ENCODE measurements at regions of chr9 and their contacts with region 1.

Region 1: DNA sequence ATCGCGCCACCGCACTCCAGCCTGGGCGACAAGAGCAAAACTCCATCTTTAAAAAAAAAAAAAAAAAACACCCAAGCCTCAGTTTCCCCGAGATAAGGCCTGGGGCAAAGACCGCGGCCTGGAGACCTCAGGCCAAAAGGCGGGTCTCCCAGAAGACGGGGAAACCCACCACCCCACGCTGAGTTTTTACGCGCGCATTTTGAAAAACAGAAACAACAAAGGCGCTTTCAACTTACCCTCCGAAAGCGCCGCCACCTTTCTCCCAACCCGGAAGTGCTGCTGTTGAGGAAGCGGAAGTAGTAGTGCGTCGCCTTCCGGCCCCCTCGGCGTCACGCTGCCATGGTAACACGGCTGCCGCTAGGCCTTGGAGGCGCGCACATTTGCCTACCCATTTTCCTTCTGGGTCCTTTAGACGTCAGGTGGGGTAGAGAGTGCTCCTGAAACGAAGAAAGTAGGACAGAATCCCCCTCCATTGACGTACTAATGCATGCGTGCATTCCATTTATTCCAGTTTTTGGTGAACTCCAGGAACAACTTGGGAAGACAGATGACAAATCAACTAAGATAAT is at the start of gene TTF1:
- DNase-seq: peak; percentile 86 to 97 (median 94)
- ATAC-seq: peak; percentile 76
- H3K4me3 ChIP-seq: peak within 1 kb of the TSS; percentile 72
- H3K4me3 Mint-ChIP-seq: peak within 1 kb of the TSS; percentile 89
- H3K27ac ChIP-seq: peak within 1 kb of the TSS; percentile 48 to 60
- H3K27ac Mint-ChIP-seq: peak within 1 kb of the TSS; percentile 83
- H3K4me1 ChIP-seq: peaks cover 59% of the 10 kb centered on the region
- H3K4me1 Mint-ChIP-seq: peaks cover 63% of the 10 kb centered on the region
- H3K27me3 ChIP-seq: peaks cover 12 to 13% of the 10 kb centered on the region in 2 experiments
- H3K27me3 Mint-ChIP-seq: peaks cover 16% of the 10 kb centered on the region
- CTCF ChIP-seq: no peak
- total RNA-seq, gene TTF1: 12.4 to 12.8 TPM

Region 2: GRCh38 chr9:131762356-131762932 is 644.2 kb before region 1 on chr9:
- CTCF ChIA-PET with region 1: no interaction called
- POLR2A ChIA-PET with region 1: no interaction called
- intact Hi-C with region 1: loop called in 1 of 2 experiments (anchors 2 kb)
- DNase-seq: peak; percentile 62 to 88 (median 72)
- ATAC-seq: peak; percentile 97
- H3K4me3 ChIP-seq: no peak overlapping the region
- H3K4me3 Mint-ChIP-seq: no peak overlapping the region
- H3K27ac ChIP-seq: no peak overlapping the region
- H3K27ac Mint-ChIP-seq: no peak overlapping the region
- H3K4me1 ChIP-seq: peaks cover 7% of the 10 kb centered on the region
- H3K4me1 Mint-ChIP-seq: no peaks in the 10 kb centered on the region
- H3K27me3 ChIP-seq: no peaks in the 10 kb centered on the region
- H3K27me3 Mint-ChIP-seq: peaks cover 21% of the 10 kb centered on the region
- CTCF ChIP-seq: peak; percentile 97

Region 3: GRCh38 chr9:132486706-132487350 is 80.2 kb after region 1 on chr9:
- CTCF ChIA-PET with region 1: no interaction called
- POLR2A ChIA-PET with region 1: no interaction called
- intact Hi-C with region 1: loop called in 1 of 2 experiments (anchors 1 kb)
- DNase-seq: peak in 11 of 14 experiments; percentile 4 to 83 (median 28)
- ATAC-seq: peak; percentile 65
- H3K4me3 ChIP-seq: peak overlapping the region; percentile 35
- H3K4me3 Mint-ChIP-seq: peak overlapping the region; percentile 74
- H3K27ac ChIP-seq: no peak overlapping the region
- H3K27ac Mint-ChIP-seq: peak overlapping the region; percentile 32
- H3K4me1 ChIP-seq: peaks cover 29% of the 10 kb centered on the region
- H3K4me1 Mint-ChIP-seq: peaks cover 27% of the 10 kb centered on the region
- H3K27me3 ChIP-seq: peaks cover 18 to 30% of the 10 kb centered on the region in 2 experiments
- H3K27me3 Mint-ChIP-seq: peaks cover 64% of the 10 kb centered on the region
- CTCF ChIP-seq: no peak

Region 4: DNA sequence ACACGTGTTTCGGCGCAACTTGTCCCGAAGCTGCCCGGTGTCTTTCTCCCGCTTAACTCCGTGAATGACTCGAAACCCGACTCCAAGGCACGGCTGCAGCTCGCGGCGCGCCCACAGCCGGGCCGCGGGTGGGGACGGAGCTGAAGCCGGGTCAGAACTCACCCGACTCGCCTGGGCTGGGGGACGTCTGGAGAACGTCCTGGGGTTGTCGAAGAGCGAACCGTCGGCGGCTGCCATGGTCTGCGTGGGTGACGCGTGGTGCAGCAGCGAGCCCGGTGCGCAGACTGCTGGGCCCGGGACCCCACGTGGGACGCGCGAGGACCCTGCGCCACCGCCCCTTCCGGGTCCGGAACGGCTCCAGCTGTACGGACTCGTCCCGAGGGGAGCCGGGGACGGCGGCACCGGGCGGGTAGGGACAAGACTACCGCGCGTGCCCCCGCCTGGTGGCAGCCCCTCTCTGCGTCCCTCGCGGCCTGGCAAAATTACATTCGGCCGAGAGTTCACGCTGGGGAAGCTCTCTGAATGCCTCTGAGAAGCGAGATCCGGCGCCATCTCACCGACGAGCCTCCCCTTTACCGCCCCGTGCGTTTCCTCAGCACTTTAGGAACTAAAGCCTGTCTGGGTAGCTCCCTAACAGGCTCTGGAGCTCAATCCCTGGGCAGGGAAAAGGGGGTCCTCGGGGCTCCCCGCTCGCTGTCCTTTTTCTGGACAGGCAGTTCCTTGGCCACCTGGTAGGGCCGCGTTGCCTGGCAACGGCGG is 263.2 kb after region 1 on chr9 and contains the start of gene DDX31:
- CTCF ChIA-PET with region 1: no interaction called
- POLR2A ChIA-PET with region 1: interaction called, 3 read pairs
- intact Hi-C with region 1: loop called (anchors 2 to 5 kb)
- DNase-seq: peak; percentile 78 to 94 (median 84)
- ATAC-seq: peak; percentile 77
- H3K4me3 ChIP-seq: peak within 1 kb of the TSS; percentile 100
- H3K4me3 Mint-ChIP-seq: peak within 1 kb of the TSS; percentile 98
- H3K27ac ChIP-seq: peak within 1 kb of the TSS; percentile 97 to 99
- H3K27ac Mint-ChIP-seq: peak within 1 kb of the TSS; percentile 92
- H3K4me1 ChIP-seq: peaks cover 32% of the 10 kb centered on the region
- H3K4me1 Mint-ChIP-seq: peaks cover 54% of the 10 kb centered on the region
- H3K27me3 ChIP-seq: no peaks in the 10 kb centered on the region
- H3K27me3 Mint-ChIP-seq: no peaks in the 10 kb centered on the region
- CTCF ChIP-seq: no peak
- total RNA-seq, gene DDX31: 11.0 to 11.3 TPM

Region 5: DNA sequence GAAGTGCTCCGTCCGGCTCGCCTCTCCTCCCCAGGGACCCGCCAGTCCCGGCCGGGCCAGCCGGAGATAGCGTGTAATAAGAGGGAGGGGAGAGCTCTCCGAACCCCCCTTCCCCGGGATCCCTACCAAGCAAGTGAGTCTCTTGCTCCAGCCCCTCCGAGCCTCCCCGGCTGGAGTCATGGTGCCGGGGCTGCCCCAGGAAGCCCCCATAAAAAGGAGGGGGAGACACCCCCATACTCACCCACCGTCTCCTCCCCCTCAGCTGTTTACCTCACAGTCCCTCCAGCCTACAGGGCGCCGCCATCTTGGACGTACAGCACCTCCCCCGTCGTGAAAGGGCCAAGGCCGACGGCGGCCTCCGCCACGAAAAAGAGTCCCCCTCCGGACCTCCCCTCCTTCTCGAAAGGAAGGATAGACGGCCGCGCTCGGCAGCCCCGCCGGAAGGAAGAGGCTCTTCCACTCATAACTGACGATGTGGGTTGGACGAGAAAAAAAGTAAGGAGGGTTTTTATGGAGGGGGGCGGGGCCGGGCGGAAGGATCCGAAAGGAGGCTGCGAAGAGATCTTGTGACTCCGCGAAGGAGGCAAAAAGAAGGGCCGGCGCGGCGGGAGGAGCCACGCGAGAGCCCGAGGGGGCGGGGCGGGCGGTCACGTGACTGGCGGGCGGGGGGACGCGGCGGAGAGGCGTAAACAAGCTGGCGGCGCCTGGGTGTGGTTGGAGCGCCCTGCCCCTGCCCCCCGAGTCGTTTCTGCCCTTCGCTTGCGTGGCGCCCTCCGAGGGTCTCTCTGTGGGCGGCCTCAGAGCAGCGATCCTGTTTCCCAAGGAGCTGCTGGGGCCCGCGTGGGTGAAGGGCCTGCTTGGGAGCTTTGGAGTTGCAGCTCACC is 537.9 kb after region 1 on chr9 and contains the start of gene TSC1:
- CTCF ChIA-PET with region 1: no interaction called
- POLR2A ChIA-PET with region 1: no interaction called
- intact Hi-C with region 1: loop called in 1 of 2 experiments (anchors 10 kb)
- DNase-seq: peak; percentile 96 to 99 (median 98)
- ATAC-seq: peak; percentile 87
- H3K4me3 ChIP-seq: peak within 1 kb of the TSS; percentile 96
- H3K4me3 Mint-ChIP-seq: peak within 1 kb of the TSS; percentile 91
- H3K27ac ChIP-seq: peak within 1 kb of the TSS; percentile 98 to 99
- H3K27ac Mint-ChIP-seq: peak within 1 kb of the TSS; percentile 97
- H3K4me1 ChIP-seq: peaks cover 24% of the 10 kb centered on the region
- H3K4me1 Mint-ChIP-seq: peaks cover 23% of the 10 kb centered on the region
- H3K27me3 ChIP-seq: no peaks in the 10 kb centered on the region
- H3K27me3 Mint-ChIP-seq: no peaks in the 10 kb centered on the region
- CTCF ChIP-seq: no peak
- total RNA-seq, gene TSC1: 50.0 to 51.9 TPM

Measured in CD4-positive, alpha-beta T cell (primary cell).